ENCODE measurements at regions of chr22 and their contacts with region 1.

Region 1: GRCh38 chr22:36856121-36856791 is 4.5 kb upstream of the NCF4 start:
- DNase-seq: peak; percentile 90 to 94 (median 94)
- ATAC-seq: peak; percentile 92
- H3K4me3 ChIP-seq: no peak overlapping the region
- H3K4me1 ChIP-seq: peaks cover 4% of the 10 kb centered on the region
- CTCF ChIP-seq: peak; percentile 100

Region 2: GRCh38 chr22:36546092-36546804 is 310.0 kb before region 1 on chr22:
- intact Hi-C with region 1: loop called in 1 of 2 experiments (anchors 10 kb)
- DNase-seq: peak in 1 of 3 donors; percentile 22
- ATAC-seq: peak; percentile 64
- H3K4me3 ChIP-seq: no peak overlapping the region
- H3K4me1 ChIP-seq: no peaks in the 10 kb centered on the region
- CTCF ChIP-seq: no peak

Region 3: DNA sequence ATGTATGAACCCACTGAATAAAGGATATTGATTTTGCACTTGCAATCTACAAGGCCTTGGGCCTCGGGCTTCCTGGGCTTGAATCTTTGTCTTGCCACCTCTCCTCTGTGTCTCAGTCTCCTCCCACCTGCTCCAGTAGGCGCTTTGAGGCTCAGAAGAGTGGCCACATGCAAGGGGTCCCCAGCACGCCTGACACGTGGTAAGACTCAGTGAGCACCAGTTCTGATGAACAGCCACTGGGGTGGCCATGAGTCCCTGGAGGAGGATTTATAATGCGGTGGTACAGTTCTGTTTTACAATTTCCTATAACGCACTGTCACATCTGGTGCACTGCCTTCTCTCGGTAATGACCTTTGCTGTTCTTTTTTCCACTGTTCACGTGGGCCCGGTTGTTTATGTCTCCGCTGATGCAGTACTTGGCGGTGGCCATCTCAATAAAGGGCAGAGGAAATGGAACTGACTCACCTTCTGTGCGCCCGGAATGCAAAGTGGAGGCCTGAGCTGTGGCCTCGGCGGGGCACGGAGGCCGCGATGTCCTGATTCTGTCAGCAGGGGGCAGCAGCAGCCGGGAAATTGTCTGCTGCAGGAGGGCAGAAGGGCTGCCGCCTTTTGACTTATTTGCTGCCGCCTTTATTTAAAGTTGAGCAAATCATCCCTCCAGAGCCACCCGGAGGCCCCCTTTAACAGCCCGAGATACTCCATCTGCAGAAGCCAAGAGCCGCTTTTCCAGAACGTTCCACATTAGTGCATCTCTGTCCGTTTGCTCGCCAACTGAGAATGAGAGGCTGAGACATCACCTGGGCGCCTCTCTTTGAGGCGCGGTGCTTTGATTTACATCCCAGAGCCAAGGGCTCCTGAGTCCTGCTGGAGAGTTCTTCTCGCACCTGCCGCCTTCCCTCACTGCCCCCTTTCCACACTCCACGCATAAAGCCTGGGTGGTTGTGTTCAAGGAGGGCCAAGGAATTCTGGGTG is 74.3 kb before region 1 on chr22:
- intact Hi-C with region 1: loop called in 1 of 2 experiments (anchors 10 kb)
- DNase-seq: peak; percentile 80 to 91 (median 86)
- ATAC-seq: peak; percentile 98
- H3K4me3 ChIP-seq: no peak overlapping the region
- H3K4me1 ChIP-seq: peaks cover 5% of the 10 kb centered on the region
- CTCF ChIP-seq: peak; percentile 81

Region 4: DNA sequence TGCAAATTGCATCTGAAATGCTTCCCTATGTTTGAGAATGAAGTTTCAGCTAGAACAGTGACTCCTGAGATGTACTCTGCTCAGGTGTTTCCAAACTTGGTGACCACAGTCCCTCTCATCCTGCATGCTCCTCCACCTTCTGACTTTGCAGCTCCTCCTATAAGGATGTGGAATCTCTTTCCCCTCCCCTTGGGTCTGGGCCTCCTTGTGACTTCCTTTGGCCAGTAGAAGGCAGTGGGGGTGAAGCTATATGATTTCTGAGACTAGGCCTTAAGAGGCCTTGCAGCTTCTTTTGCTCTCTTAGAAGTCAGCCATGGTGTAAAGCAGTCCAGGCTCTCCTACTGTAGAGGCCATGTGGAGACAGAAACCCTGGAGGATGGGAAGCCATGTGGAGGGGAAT is 107.8 kb after region 1 on chr22:
- intact Hi-C with region 1: no loop called
- DNase-seq: no peak
- ATAC-seq: no peak
- H3K4me3 ChIP-seq: no peak overlapping the region
- H3K4me1 ChIP-seq: no peaks in the 10 kb centered on the region
- CTCF ChIP-seq: no peak

Region 5: DNA sequence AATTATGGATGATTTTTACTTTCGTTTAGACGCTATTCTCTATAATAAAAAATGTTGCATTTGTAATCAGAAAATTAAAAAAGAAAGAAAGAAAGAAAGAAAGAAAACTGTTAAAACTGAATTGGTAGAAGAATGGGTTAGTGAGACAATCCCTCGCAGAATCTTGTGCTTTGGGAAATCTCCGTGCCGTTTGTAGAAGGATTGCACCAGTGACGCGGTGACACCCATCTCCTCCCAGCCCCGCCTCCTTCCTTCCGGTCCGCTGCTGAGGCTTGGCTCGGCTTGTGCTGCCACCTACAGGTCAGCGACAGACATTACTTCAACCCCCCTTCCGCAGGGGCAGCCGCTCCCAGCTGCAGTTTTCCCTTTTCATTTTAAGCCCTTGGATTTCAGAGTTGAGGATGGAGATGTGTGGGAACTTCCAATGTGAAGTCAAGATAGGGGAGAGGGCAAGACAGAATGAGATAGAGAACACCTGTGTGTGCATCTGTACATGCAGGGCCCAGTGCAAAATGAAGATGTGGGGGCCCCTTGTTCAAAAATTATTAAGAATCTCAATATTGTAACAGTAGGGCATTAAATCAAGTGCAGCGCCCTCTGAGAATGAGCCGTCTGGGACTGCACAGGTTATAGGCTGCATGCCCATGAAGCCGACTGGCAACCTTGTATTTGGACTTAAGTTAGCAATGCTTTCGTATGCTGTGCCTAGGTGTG is 121.8 kb after region 1 on chr22:
- intact Hi-C with region 1: loop called (anchors 10 kb)
- DNase-seq: peak; percentile 93 to 94 (median 93)
- ATAC-seq: peak; percentile 99
- H3K4me3 ChIP-seq: no peak overlapping the region
- H3K4me1 ChIP-seq: no peaks in the 10 kb centered on the region
- CTCF ChIP-seq: peak; percentile 89

Measured in mucosa of descending colon (tissue), 3 donors.